ENCODE measurements at regions of chr3 and their contacts with region 1.

Region 1: DNA sequence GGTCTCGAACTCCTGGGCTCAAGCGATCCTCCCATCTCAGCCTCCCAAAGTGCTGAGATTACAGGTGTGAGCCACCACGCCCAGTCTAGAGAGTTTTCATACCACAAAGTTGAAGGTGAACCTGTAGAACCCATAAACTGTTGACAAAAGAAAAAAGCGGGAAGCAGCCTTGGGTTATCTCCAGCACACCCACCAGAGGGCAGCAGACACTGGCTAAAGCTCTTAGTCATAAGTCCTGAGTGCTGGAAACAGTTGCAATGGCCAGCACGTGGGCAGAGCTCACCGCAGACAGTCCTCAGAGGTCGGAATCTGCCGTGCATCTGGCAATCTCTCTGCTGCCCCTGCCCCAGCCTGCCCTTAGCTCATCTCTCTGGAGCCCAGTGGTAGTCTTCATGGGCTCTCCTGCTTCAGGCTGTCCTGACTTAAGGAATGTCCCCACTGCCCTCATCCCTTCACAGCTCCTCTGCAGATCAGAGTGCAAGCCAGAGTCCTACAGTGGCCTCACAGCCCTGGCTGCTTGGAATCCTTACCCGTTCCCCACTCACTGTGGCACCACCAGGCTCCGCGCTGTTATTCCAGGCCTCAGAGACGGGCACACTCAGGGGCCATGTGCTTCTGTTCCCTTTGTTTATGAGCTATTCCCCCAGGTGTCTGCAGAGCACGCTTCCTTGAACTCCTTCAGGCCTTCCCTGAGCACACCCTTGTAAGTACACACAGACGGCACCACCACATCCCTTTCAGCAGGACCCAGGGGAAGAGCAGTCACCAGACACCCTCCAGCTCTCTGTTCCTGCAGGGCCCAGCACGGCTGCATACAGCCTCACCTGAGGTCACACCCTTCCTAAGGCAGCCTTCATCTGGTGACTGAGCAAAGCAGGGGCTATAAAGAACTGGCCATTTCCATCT is 8.8 kb upstream of the ELP6 start:
- DNase-seq: peak; percentile 73
- H3K4me3 ChIP-seq: no peak overlapping the region
- H3K27ac ChIP-seq: no peak overlapping the region
- H3K4me1 ChIP-seq: no peaks in the 10 kb centered on the region
- H3K27me3 ChIP-seq: no peaks in the 10 kb centered on the region
- CTCF ChIP-seq: peak; percentile 85

Region 2: DNA sequence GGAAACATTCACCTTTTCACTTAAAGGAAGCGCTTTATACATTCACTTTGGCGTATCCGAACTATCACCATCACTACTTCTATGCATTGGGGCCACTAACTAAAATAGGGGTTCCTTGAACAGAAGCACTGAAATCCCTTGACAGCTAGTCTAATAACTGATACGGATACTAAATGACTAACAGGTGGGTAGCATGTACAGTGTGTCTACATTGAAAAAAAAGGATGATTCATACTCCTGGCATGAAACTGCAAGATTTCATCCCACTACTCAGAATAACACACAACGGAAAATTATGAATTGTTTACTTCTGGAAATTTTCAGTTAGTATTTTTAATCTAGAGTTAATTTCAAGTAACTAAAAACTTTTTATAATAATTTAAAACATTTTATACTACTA is 162.7 kb after region 1 on chr3:
- CTCF ChIA-PET with region 1: interaction called, 12 read pairs
- POLR2A ChIA-PET with region 1: no interaction called
- intact Hi-C with region 1: no loop called
- DNase-seq: no peak
- H3K4me3 ChIP-seq: no peak overlapping the region
- H3K27ac ChIP-seq: no peak overlapping the region
- H3K4me1 ChIP-seq: no peaks in the 10 kb centered on the region
- H3K27me3 ChIP-seq: no peaks in the 10 kb centered on the region
- CTCF ChIP-seq: no peak

Region 3: GRCh38 chr3:47791193-47791855 is 269.0 kb after region 1 on chr3:
- CTCF ChIA-PET with region 1: interaction called, 3 read pairs
- POLR2A ChIA-PET with region 1: no interaction called
- intact Hi-C with region 1: loop called (anchors 1 kb)
- DNase-seq: no peak
- H3K4me3 ChIP-seq: no peak overlapping the region
- H3K27ac ChIP-seq: no peak overlapping the region
- H3K4me1 ChIP-seq: no peaks in the 10 kb centered on the region
- H3K27me3 ChIP-seq: no peaks in the 10 kb centered on the region
- CTCF ChIP-seq: no peak

Measured in PC-9 (cell line).